ENCODE measurements at regions of chr16 and their contacts with region 1.

Region 1: DNA sequence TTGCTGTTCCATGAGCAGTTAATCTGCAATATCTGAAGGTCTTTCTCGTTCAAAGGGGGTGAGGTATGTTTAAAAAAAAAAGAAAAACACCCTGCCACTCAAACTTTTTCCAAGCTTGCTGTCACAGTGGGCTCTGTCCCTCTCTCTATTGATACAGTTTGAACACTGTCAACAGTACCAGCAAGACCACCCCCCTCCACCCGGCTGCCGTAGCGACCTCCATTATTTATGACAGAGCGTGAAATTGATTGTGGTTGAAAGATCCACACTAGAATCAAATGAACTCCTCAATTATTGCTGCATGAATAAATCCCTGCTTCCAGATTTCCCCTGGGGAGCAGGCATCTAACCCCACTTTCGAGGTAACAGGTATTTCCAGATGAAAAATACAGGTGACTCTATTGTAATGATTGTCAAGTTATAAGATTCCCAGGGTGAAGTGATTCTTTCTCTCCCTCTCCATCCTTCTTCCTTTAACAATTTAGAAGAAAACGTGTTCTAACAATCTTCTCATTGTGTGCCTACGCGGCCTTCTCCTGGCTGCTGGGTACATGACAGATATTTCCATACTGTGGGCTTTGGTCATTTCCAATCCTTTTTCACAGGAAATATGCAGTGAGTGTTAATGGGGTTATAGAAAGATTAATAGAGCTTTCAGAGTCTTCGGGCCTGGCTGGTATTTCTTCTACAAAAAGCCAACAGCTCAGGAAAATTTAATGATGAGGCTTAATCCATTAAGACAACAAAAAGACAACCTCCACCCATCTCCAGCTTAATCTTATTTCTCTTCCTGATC is 135.7 kb upstream of the C16orf82 start:
- DNase-seq: no peak
- H3K4me3 ChIP-seq: no peak overlapping the region
- H3K27ac ChIP-seq: no peak overlapping the region
- H3K27me3 ChIP-seq: peaks cover 0 to 5% (median 0%) of the 10 kb centered on the region in 45 donors
- CTCF ChIP-seq: no peak

Region 2: DNA sequence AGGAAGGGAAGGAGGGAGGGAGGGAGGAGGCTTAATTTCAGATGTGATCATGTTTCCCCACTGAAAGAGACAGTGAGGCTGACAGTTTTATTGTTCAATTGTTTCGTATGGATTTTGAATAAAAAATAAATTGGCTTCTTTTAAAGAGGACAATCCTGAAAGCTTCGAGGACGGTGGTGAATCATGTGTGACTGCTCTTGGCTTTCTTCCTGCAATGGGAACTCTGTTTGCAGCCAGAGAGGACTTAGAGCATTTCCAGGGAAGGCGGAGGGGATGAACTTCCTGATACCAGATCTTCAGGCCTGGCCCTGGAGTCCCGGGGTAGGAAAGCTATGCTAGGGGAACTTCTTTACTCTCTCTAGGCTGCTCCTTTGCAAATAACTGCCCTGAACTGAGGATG is 63.0 kb after region 1 on chr16:
- intact Hi-C with region 1: loop called in 1 of 2 experiments (anchors 10 kb)
- DNase-seq: no peak
- H3K4me3 ChIP-seq: no peak overlapping the region
- H3K27ac ChIP-seq: no peak overlapping the region
- H3K27me3 ChIP-seq: peaks cover 0 to 26% (median 3%) of the 10 kb centered on the region in 45 donors
- CTCF ChIP-seq: no peak